CD4-positive, alpha-beta memory T cell (primary cell): ENCODE measurements at regions of chr11 and their contacts with region 1.

Region 1: DNA sequence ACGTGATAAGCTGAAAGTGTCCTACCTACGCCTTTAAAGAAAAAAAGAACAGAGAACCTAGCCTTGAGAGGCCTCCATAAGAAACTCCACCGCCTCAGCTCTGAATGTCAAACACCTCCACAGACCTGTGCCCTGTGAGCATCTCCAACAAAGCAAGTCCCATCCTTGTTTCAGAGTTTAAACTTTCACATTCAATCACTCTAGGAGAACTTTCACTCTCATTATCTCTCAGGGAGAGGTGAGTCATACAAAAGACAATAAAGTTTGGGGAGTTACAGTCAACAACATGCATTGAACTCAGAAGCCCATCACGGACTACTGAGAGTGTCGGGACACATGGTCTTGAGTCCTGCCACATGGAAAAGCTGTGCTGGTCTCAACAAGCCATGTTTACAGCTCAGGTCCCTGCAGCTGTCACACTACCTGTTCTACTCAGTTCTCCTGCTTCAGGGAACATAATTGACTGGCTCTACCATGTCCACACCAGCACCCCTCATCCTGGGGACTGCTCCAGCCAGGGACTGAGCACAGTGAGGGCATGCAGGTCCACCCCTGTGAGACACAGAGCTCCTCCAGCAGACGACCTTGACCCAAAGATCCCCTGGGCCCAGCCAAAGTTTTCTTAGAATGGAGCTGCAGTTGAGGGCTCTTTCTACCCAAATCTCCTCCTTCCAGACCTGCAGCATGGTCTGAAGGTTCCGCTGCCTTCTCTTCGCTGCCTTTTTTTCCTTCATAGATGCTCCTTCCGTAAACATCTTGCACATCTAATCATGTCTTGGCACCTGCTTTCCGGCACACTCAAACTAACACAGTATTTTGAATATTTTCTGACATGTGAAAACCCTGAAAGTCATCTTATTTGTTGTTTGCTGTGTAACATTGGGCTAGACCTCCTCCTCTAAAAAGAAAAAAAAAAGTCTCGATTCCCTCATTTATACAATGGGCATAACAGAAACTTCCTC is 114.9 kb downstream of the ETS1 start:
- DNase-seq: peak in 4 of 5 donors; percentile 51 to 82 (median 57)
- H3K4me3 ChIP-seq: peak overlapping the region; percentile 5 to 27
- H3K4me3 Mint-ChIP-seq: peak overlapping the region; percentile 70 to 93 (median 84)
- H3K27ac ChIP-seq: peak overlapping the region; percentile 94
- H3K27ac Mint-ChIP-seq: peak overlapping the region; percentile 98 to 99 (median 99)
- H3K4me1 ChIP-seq: peaks cover 100% of the 10 kb centered on the region
- H3K4me1 Mint-ChIP-seq: peaks cover 85 to 98% (median 92%) of the 10 kb centered on the region in 4 donors
- H3K27me3 ChIP-seq: no peaks in the 10 kb centered on the region
- H3K27me3 Mint-ChIP-seq: no peaks in the 10 kb centered on the region

Region 2: GRCh38 chr11:128422576-128423370 is 49.6 kb before region 1 on chr11:
- CTCF ChIA-PET with region 1: no interaction called
- POLR2A ChIA-PET with region 1: interaction called, 11 read pairs
- intact Hi-C with region 1: loop called (anchors 5 kb)
- DNase-seq: peak; percentile 84 to 95 (median 90)
- H3K4me3 ChIP-seq: peak overlapping the region in 1 of 2 donors; percentile 28
- H3K4me3 Mint-ChIP-seq: peak overlapping the region; percentile 48 to 81 (median 72)
- H3K27ac ChIP-seq: peak overlapping the region; percentile 50
- H3K27ac Mint-ChIP-seq: peak overlapping the region; percentile 97 to 100 (median 98)
- H3K4me1 ChIP-seq: peaks cover 26% of the 10 kb centered on the region
- H3K4me1 Mint-ChIP-seq: peaks cover 31 to 45% (median 40%) of the 10 kb centered on the region in 4 donors
- H3K27me3 ChIP-seq: no peaks in the 10 kb centered on the region
- H3K27me3 Mint-ChIP-seq: no peaks in the 10 kb centered on the region

Region 3: GRCh38 chr11:128482512-128483191 is 10.2 kb after region 1 on chr11:
- CTCF ChIA-PET with region 1: interaction called, 12 read pairs
- POLR2A ChIA-PET with region 1: interaction called, 662 read pairs
- intact Hi-C with region 1: loop called (anchors 1 kb)
- DNase-seq: peak; percentile 68 to 88 (median 72)
- H3K4me3 ChIP-seq: peak overlapping the region; percentile 27 to 47
- H3K4me3 Mint-ChIP-seq: peak overlapping the region; percentile 73 to 92 (median 81)
- H3K27ac ChIP-seq: peak overlapping the region; percentile 94
- H3K27ac Mint-ChIP-seq: peak overlapping the region; percentile 88 to 99 (median 99)
- H3K4me1 ChIP-seq: peaks cover 99% of the 10 kb centered on the region
- H3K4me1 Mint-ChIP-seq: peaks cover 86 to 98% (median 93%) of the 10 kb centered on the region in 4 donors
- H3K27me3 ChIP-seq: no peaks in the 10 kb centered on the region
- H3K27me3 Mint-ChIP-seq: no peaks in the 10 kb centered on the region

Region 4: GRCh38 chr11:128488471-128488870 is 16.1 kb after region 1 on chr11:
- CTCF ChIA-PET with region 1: interaction called, 12 read pairs
- POLR2A ChIA-PET with region 1: interaction called, 662 read pairs
- intact Hi-C with region 1: loop called (anchors 1 kb)
- DNase-seq: peak in 1 of 5 donors; percentile 85
- H3K4me3 ChIP-seq: peak overlapping the region in 1 of 2 donors; percentile 11
- H3K4me3 Mint-ChIP-seq: peak overlapping the region; percentile 10 to 81 (median 68)
- H3K27ac ChIP-seq: peak overlapping the region; percentile 89
- H3K27ac Mint-ChIP-seq: peak overlapping the region; percentile 90 to 99 (median 97)
- H3K4me1 ChIP-seq: peaks cover 99% of the 10 kb centered on the region
- H3K4me1 Mint-ChIP-seq: peaks cover 92 to 99% (median 95%) of the 10 kb centered on the region in 4 donors
- H3K27me3 ChIP-seq: no peaks in the 10 kb centered on the region
- H3K27me3 Mint-ChIP-seq: no peaks in the 10 kb centered on the region